Right ventricle myocardium inferior (tissue), 1 donor: ENCODE measurements at regions of chr22 and their contacts with region 1.

Region 1: DNA sequence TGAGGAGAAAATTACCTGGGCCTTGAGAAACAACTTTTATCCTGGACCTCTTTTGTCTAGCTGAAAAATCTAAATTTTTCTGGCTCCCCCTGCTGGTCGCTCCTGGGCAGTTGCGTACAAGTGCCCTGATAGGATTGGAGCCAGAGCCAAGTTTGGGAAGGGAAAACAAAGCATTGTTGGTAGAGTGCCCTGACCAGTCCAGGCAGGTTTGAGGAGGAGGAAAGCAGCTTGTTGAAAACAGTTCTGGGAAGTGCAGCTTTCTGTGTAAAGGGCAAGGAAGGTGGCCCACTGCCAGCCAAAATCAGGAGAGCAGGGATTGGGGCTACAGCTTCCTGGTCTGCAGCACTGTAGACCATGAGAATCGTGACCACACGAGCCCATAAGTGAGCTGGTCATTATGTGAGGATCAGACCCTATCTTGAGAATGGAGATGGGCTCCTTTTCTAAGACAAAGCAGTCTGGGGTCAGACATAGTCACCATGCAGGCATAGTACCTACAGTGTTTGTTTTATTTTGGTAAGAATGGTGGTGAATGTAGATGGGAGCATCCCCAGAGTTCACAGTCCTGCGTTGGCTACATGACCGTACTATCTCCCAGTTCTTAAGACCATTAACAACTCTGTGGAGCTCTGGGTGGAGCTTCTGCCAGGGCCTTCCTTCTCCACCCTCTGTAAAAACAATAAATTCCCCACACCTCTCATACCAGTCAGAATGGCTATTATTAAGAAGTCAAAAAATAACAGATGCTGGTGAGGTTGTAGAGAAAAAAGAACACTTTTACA is 21.3 kb upstream of the PIK3IP1 start:
- DNase-seq: no peak
- ATAC-seq: peak; percentile 89

Region 2: DNA sequence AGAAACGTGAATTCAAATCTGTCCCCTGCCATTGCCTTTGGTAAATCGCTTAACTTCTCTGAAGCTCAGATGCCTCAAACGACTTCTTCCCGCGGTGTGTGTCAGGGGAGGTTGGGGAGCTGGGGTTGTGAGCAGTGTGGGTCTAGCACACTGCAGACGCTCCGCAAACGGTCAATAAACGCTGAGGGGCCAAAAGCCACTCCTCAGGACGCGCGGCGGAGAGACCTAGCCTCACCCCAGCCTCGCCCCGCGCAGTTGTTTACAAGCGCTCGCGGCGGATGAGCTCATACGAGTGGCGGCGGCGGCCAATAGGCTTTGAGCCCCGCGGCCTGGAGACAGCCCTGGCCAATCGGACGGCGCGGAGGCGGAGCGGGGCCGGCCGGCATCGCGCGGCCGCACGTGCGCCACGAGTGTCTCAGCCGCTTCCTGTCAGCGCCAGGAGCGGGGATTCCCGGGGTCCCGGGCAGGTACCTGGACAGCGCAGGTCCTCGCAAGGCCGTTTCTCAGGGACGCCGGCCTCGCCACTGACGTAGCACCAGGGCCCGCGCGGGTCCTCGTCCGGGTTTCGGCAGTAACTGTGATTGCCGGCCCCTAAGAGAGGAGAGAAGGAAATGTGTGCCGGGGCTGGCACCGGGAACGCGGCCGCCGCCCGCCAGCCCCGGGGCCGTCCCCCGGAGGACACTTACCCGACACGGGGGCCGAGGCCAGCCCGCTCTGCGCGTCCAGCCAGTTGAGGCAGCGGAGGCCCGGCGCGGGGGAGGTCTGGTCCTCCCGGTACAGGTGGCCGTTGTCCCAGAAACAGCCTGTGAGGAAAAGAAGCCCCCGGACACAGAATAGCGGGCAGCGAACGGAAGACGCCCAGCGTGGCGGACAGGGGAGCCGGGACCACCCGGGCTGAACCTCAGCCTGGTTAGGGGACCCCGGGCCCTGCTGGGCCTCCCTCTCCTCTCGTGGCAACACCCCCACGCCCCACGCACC is 22.8 kb before region 1 on chr22:
- intact Hi-C with region 1: loop called (anchors 2 kb)
- DNase-seq: peak; percentile 99
- ATAC-seq: peak; percentile 94

Region 3: GRCh38 chr22:31345331-31346254 is 32.0 kb after region 1 on chr22:
- intact Hi-C with region 1: no loop called
- DNase-seq: peak; percentile 95
- ATAC-seq: peak; percentile 72